Right ventricle myocardium inferior (tissue), 1 donor: ENCODE measurements at regions of chr17 and their contacts with region 1.

Region 1: DNA sequence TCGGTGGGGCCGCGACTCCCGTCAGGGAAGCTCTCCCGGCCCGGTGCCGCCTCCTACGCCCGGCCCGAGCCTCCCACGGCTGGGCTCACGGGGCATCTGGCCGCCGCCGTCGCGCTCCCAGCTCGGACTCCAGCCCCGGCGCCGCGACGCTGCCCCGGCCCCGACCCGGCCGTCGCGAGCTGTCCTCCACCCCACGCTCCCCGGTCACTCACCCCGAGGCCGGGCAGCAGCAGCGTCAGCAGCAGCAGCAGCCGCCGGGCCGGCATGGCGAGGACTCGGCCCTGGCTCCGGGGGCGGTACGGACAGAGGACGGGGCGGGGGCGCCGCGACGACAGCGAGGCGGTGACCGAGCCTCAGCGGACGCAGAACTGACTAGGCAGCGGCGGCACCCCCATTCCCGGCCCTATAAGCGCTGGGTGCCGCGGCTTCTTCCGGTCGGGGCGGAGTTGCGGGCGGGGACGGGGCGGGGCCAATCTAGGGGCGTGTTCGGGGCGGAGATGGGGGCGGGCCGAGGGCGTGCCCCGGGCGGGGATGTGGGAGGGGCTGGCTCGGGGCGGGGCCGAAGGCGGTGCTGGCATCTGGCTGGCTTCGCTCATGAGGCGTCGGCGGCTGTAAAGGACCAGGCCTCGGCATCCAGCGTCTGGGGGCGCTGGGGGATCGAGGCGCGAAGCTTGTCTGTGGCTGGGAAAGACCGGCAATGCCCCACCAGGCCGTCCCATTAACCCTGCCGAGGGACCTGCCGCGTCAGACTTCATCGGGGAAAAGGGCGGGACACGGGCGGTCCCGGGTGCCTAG is at the start of gene ERN1:
- DNase-seq: peak; percentile 98
- ATAC-seq: peak; percentile 98
- total RNA-seq, gene ERN1: 7.1 TPM

Region 2: DNA sequence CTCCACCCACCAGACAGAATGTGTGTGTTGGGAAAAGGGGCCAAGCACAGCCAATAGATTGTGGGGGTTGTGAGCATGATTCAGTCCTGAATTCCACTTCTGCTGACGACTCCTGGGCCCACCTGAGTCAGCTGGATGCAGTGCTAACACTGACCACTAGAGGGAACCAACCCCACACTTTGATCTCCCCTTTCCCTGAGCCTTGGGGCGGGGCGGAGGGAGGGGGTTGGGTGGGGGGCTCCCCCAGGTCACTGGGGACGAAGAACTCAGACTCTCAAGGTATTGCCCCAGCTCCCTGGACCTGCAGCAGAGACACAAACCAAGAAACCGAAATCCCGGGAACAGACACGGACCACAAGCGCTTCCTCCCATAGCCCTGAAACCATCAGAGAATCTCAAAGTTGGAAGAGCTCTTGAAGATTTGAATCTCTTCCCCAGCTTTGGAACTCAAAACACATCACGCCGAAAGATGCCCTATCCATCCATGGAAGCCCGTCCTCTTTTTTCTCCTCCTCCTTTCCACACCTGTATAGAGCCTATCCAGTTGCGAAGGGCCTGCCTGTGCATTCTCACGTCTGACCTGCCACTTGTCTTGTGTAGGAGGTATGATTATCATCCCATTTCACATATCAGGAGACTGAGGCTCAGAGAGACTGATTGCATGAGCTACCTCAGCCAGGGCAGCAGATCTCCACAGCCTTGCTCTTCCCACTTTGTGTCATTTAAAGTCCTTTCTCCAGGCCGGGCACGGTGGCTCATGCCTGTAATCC is 218.1 kb before region 1 on chr17:
- intact Hi-C with region 1: loop called (anchors 5 kb)
- DNase-seq: no peak
- ATAC-seq: no peak

Region 3: DNA sequence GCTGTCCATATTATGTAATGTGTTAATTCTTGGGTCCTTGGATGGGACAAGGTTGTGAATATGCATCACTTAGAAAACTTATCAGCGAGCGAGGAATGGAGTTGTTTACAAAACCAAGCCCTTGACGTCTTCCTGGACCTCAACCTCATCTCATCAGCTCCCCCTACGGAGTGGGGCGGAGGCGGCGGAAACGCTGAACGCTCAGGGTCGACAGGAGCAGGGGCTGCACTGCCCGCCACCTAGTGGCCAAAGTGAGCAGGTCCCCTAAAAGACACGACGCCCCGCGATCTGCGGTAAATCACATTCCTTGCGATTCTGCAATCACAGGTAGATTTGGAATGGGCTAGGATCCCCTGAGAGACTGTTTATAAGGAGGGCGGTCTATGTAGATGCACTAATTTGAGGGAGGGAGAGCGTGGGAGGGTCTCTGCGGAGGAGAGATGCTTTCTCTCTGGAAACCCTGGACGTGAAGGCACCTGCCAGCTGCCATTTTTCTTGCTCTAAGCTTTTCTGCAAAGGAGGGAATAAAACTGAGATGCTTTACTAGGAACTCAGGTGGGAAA is 104.1 kb before region 1 on chr17:
- intact Hi-C with region 1: loop called (anchors 2 kb)
- DNase-seq: peak; percentile 86
- ATAC-seq: peak; percentile 61

Region 4: GRCh38 chr17:64063766-64064224 is 66.2 kb before region 1 on chr17:
- intact Hi-C with region 1: loop called (anchors 5 kb)
- DNase-seq: peak; percentile 81
- ATAC-seq: peak; percentile 55

Region 5: DNA sequence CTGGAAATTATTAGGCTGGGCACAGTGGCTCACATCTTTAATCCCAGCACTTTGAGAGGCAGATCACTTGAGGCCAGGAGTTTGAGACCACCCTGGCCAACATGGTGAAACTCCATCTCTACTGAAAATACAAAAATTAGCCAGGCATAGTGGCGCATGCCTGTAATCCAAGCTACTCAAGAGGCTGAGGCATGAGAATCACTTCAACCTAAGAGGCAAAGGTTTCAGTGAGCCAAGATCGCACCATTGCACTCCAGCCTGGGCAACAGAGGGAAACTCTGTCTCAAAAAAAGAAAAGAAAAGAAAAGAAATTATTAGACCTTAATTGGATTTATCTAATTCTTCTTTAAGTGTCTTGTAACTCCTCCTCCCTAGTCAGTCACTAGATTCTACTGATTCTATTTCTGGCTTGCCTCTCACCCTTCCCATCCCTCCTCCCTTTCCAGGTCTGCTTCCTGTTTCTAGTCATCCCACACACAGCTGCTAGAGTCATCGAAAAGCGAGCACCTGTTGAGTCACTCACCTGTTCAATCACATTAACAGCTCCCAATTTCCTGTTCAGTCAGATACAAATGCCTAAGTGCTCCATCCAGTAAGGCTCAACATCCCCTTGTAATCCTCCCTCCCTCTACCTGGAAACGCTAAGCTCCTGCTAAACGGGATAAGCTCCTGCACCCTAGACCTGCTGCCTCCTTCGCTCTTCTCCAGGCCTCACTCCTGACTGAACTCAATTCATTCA is 34.6 kb before region 1 on chr17:
- intact Hi-C with region 1: no loop called
- DNase-seq: no peak
- ATAC-seq: no peak

Region 6: DNA sequence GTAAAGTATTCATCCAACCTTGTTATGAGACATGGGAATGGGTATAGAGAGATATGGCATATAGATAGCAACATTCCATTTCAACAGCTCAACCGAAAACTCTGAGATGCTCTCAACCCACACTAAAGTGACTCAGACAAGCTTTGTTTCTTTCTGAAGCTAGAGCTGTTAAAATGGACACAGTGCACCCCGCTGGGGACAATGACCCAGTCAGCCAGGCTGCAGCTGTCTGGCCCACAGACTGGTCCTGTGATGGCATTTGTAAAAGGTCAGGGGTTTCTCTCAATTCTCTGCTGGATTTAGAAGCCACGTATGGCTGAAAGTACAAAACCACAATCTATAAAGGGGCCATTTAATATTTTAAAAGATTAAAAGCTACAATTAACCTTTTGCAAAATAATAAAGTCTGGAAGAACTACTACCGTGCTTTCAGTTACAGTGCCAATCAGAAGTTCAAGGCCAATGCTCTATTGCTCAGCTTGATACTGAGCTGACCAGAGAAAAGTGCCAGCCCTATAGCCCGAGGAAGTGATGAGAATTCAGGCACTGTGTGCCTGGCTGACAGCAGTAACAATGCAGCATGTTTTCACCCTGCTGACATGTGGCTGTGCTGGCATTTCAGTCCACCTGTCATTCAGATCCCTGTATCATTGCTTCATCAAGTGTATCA is 72.8 kb after region 1 on chr17:
- intact Hi-C with region 1: no loop called
- DNase-seq: no peak
- ATAC-seq: peak; percentile 64